BJ (cell line): ENCODE measurements at regions of chr19 and their contacts with region 1.

Region 1: GRCh38 chr19:15154002-15154612 is 46.7 kb downstream of the NOTCH3 start:
- DNase-seq: no peak
- H3K4me3 ChIP-seq: no peak overlapping the region
- H3K27me3 ChIP-seq: no peaks in the 10 kb centered on the region; the same call in 1 of the 2 replicates
- CTCF ChIP-seq: peak; percentile 66

Region 2: GRCh38 chr19:15091901-15092753 is 62.0 kb before region 1 on chr19:
- CTCF ChIA-PET with region 1: interaction called, 20 read pairs
- POLR2A ChIA-PET with region 1: no interaction called
- DNase-seq: no peak
- H3K4me3 ChIP-seq: no peak overlapping the region
- H3K27me3 ChIP-seq: no peaks in the 10 kb centered on the region
- CTCF ChIP-seq: peak; percentile 60

Region 3: DNA sequence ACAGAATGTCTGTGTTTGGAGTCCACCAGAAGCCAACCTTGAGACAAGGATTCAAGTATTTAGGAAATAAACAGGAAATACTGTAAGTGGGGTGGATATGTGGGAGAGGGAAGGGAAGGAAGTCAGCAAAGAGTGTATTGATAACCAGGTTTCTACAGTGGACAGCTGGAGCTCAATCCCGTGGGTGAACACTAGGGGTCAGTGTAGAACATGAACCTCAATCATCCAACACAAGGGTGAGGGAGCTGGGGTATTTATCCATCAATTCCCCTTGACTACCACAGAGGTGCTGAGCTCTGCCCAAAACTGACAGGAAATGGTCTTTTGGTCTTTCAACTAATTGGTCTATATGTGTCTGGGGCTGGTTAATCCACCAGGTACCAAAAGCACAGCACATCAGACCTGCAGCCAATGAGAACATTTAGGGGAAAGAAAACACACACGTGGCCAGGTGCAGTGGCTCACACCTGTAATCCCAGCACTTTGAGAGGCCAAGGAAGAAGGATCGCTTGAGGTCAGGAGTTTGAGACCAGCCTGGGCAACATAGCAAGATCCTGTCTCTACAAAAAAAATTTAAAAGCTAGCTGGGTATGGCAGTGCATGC is 52.5 kb before region 1 on chr19:
- CTCF ChIA-PET with region 1: interaction called, 76 read pairs
- POLR2A ChIA-PET with region 1: no interaction called
- DNase-seq: no peak
- H3K4me3 ChIP-seq: no peak overlapping the region
- H3K27me3 ChIP-seq: no peaks in the 10 kb centered on the region
- CTCF ChIP-seq: peak; percentile 78

Region 4: GRCh38 chr19:15129856-15130597 is 24.1 kb before region 1 on chr19:
- CTCF ChIA-PET with region 1: interaction called, 13 read pairs
- POLR2A ChIA-PET with region 1: no interaction called
- DNase-seq: no peak
- H3K4me3 ChIP-seq: no peak overlapping the region
- H3K27me3 ChIP-seq: no peaks in the 10 kb centered on the region; the same call in 1 of the 2 replicates
- CTCF ChIP-seq: no peak

Region 5: GRCh38 chr19:15280915-15281683 is 127.0 kb after region 1 on chr19:
- CTCF ChIA-PET with region 1: no interaction called
- POLR2A ChIA-PET with region 1: no interaction called
- DNase-seq: no peak
- H3K4me3 ChIP-seq: no peak overlapping the region
- H3K27me3 ChIP-seq: no peaks in the 10 kb centered on the region
- CTCF ChIP-seq: peak; percentile 46

Region 6: DNA sequence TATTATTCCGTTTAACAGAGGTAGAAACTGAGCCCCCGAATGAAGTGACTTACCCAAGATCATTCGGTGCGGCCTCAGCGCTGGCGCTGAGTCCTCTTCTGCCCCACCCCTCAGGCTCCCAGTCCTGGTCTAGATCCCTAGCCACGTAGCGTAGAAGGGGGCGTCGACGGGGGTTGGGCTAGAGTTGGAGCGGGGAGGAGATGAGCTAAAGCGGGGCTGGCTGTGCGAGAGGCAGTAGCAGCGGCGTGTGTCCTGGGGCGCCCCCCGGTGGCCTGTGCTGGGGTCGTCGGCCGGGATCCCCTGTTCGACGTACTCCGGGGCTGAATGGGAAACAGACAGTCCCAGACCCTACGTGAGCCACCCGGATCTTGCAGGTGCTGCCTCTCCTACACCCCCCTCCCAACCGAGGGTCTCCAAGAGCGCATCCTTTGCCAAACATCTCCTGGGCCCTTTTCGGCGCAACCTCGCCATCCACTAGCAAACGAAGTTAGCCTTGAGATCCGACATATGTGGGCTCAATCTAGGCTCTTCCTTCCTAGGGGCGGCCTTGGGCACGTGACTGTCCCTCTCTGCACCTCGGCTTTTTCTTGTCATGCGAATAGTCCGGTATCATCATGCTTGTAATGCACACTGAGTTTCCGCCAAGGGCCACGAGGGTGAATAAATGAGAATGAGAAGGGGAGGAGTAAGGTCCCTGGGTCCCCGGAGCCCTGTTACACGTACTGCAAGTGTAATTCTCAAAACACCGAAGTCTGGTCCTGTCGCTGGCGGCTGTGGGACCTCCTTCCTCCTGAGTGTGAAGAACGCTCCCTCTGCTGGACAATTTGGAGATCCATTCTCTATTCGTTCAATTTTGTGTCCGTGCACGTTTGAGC is 401.9 kb after region 1 on chr19:
- CTCF ChIA-PET with region 1: interaction called, 10 read pairs
- POLR2A ChIA-PET with region 1: no interaction called
- DNase-seq: peak; percentile 14
- H3K4me3 ChIP-seq: peak overlapping the region; percentile 5; the same call in 1 of the 2 replicates
- H3K27me3 ChIP-seq: peaks cover 2% of the 10 kb centered on the region
- CTCF ChIP-seq: peak; percentile 79